Activated naive CD4-positive, alpha-beta T cell treated with anti-CD3 and anti-CD28 coated beads for 36 hours (primary cell): ENCODE measurements at regions of chr19 and their contacts with region 1.

Region 1: GRCh38 chr19:1020868-1021425 is at the start of gene TMEM259:
- DNase-seq: peak; percentile 98
- H3K4me3 Mint-ChIP-seq: peak within 1 kb of the TSS; percentile 95
- H3K27ac Mint-ChIP-seq: peak within 1 kb of the TSS; percentile 98
- H3K4me1 Mint-ChIP-seq: peaks cover 41% of the 10 kb centered on the region
- H3K27me3 Mint-ChIP-seq: no peaks in the 10 kb centered on the region
- total RNA-seq, gene TMEM259: 105 to 109 TPM

Region 2: GRCh38 chr19:913080-913748 is 107.7 kb before region 1 on chr19 and contains the start of gene R3HDM4:
- CTCF ChIA-PET with region 1: no interaction called
- intact Hi-C with region 1: no loop called
- DNase-seq: peak; percentile 88
- H3K4me3 Mint-ChIP-seq: peak within 1 kb of the TSS; percentile 84
- H3K27ac Mint-ChIP-seq: peak within 1 kb of the TSS; percentile 95
- H3K4me1 Mint-ChIP-seq: peaks cover 34% of the 10 kb centered on the region
- H3K27me3 Mint-ChIP-seq: peaks cover 2% of the 10 kb centered on the region
- total RNA-seq, gene R3HDM4: 111 to 120 TPM

Region 3: GRCh38 chr19:1039646-1040475 is 18.9 kb after region 1 on chr19 and contains the start of gene ABCA7:
- CTCF ChIA-PET with region 1: no interaction called
- intact Hi-C with region 1: loop called (anchors 1 kb)
- DNase-seq: peak; percentile 100
- H3K4me3 Mint-ChIP-seq: peak within 1 kb of the TSS; percentile 94
- H3K27ac Mint-ChIP-seq: peak within 1 kb of the TSS; percentile 65
- H3K4me1 Mint-ChIP-seq: peaks cover 41% of the 10 kb centered on the region
- H3K27me3 Mint-ChIP-seq: no peaks in the 10 kb centered on the region
- total RNA-seq, gene ABCA7: 24.4 to 30.1 TPM

Region 4: DNA sequence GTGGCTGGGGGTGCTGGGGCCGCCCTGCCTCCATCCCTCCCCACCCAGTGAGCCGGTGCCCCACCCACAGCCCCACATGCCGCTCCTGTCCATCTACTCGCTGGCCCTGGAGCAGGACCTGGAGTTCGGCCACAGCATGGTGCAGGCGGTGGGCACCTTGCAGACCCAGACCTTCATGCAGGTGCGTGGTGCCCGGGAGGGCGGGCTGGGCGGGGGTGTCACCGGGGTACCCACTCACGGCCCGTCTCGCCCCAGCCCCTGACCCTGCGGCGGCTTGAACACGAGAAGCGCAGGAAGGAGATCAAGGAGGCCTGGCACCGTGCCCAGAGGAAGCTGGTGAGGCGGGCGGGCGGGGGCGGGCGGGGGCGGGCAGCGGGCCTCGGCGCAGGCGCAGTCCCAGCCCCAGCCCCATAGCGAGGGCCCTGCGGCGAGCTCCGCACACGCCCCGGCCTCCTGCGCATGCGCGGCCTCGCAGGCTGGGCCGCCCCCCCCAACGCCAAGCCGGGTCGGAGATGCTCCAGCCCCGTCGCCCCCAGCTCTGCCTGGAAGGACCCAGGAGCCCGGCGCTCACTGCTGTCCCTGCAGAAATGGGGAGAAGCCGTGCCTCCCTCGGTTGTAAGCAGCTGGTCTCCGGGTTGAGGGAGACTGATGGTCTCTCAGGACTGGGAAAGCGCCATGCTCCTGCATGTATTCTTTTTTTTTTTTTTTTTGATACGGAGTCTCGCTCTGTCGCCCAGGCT is 53.8 kb after region 1 on chr19:
- CTCF ChIA-PET with region 1: no interaction called
- intact Hi-C with region 1: loop called (anchors 1 kb)
- DNase-seq: peak; percentile 93
- H3K4me3 Mint-ChIP-seq: peak overlapping the region; percentile 59
- H3K27ac Mint-ChIP-seq: peak overlapping the region; percentile 75
- H3K4me1 Mint-ChIP-seq: peaks cover 66% of the 10 kb centered on the region
- H3K27me3 Mint-ChIP-seq: no peaks in the 10 kb centered on the region

Region 5: GRCh38 chr19:1103708-1104310 is 82.9 kb after region 1 on chr19 and contains the start of gene GPX4:
- CTCF ChIA-PET with region 1: no interaction called
- intact Hi-C with region 1: loop called (anchors 2 kb)
- DNase-seq: peak; percentile 99
- H3K4me3 Mint-ChIP-seq: peak within 1 kb of the TSS; percentile 72
- H3K27ac Mint-ChIP-seq: peak within 1 kb of the TSS; percentile 79
- H3K4me1 Mint-ChIP-seq: peaks cover 54% of the 10 kb centered on the region
- H3K27me3 Mint-ChIP-seq: no peaks in the 10 kb centered on the region
- total RNA-seq, gene GPX4: 244 to 253 TPM

Region 6: DNA sequence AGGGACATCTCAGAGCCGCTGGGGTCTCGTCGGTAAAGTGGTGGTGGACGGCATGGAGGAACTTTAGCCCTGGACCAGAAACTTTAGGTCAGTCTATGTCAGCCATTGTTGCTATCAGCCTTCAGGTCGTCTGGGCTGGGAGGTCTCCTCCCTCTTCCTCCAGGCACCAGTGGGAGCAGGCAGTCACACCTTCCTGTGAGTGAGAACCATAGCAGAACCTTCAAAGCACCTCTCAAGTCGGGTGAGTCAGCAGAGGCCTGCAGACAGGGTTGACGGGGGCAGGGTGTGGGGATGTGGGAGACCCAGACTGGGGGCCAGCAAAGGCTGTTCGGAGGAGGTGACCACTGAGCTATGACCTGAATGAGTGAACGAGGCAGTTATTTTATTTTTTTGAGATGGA is 168.5 kb after region 1 on chr19:
- CTCF ChIA-PET with region 1: no interaction called
- intact Hi-C with region 1: loop called (anchors 5 kb)
- DNase-seq: peak; percentile 87
- H3K4me3 Mint-ChIP-seq: no peak overlapping the region
- H3K27ac Mint-ChIP-seq: peak overlapping the region; percentile 63
- H3K4me1 Mint-ChIP-seq: peaks cover 30% of the 10 kb centered on the region
- H3K27me3 Mint-ChIP-seq: no peaks in the 10 kb centered on the region

Region 7: GRCh38 chr19:1241417-1242095 is 220.6 kb after region 1 on chr19 and contains the start of gene ATP5F1D:
- CTCF ChIA-PET with region 1: interaction called, 3 read pairs
- intact Hi-C with region 1: loop called (anchors 2 kb)
- DNase-seq: peak; percentile 94
- H3K4me3 Mint-ChIP-seq: peak within 1 kb of the TSS; percentile 84
- H3K27ac Mint-ChIP-seq: peak within 1 kb of the TSS; percentile 86
- H3K4me1 Mint-ChIP-seq: peaks cover 43% of the 10 kb centered on the region
- H3K27me3 Mint-ChIP-seq: peaks cover 10% of the 10 kb centered on the region
- total RNA-seq, gene ATP5F1D: 153 TPM